Calu3 (cell line): ENCODE measurements at regions of chr14 and their contacts with region 1.

Region 1: GRCh38 chr14:80493620-80494019 is 282.3 kb upstream of the DIO2 start:
- DNase-seq: no peak
- H3K4me3 Mint-ChIP-seq: no peak overlapping the region
- H3K27ac Mint-ChIP-seq: no peak overlapping the region
- H3K4me1 Mint-ChIP-seq: no peaks in the 10 kb centered on the region
- H3K27me3 Mint-ChIP-seq: no peaks in the 10 kb centered on the region
- CTCF ChIP-seq: no peak

Region 2: DNA sequence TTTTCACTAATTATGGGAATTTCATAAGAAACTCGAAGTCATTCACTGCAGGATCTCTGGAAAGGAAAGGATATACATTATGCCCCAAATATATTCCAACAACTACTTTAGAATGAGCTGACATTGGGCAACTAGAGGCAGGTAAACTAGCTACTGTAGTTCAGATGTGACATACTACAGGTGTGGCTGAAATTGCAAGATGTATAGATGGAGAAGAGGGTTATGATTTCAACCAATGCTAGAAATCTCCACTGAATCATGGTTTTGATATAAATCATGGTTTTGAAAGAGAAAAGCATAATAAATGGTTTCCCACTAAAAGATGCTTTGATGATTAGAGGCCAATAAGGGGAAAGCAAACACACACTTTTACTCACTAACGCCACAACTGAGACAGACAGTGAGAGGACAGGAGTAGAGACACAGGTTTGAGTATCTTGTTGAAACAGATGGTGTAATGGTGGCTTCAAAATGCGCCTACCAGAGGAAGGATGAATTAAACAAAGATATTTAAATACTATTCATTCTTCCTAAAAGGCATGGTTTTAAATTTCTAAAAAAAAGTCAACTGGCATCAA is 13.8 kb after region 1 on chr14:
- CTCF ChIA-PET with region 1: no interaction called
- intact Hi-C with region 1: loop called (anchors 2 kb)
- DNase-seq: no peak
- H3K4me3 Mint-ChIP-seq: no peak overlapping the region
- H3K27ac Mint-ChIP-seq: no peak overlapping the region
- H3K4me1 Mint-ChIP-seq: no peaks in the 10 kb centered on the region
- H3K27me3 Mint-ChIP-seq: no peaks in the 10 kb centered on the region
- CTCF ChIP-seq: no peak